ENCODE measurements at regions of chr18 and their contacts with region 1.

Region 1: DNA sequence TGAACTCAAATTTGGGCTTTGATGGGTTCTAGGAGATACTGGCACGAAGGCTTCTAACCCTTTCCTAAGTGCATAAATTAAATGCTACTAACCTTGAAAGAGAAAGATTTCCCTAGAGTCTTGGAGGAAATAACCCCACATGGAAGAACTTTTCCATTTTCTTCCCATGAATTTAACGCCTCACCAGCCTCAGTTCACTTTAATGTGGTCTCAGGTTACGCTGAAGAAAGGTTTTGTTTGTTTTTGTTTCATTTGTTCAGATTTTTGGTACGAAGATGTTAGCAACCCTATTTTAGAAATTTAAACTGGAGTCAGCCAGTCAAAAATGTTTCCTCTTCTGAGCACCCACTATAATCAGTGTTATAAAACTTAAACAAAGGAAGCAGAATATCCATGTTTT is 30.7 kb downstream of the METTL4 start:
- DNase-seq: no peak
- ATAC-seq: no peak
- H3K4me3 ChIP-seq: no peak overlapping the region
- H3K27ac ChIP-seq: no peak overlapping the region
- H3K4me1 ChIP-seq: peaks cover 10% of the 10 kb centered on the region
- H3K27me3 ChIP-seq: no peaks in the 10 kb centered on the region
- CTCF ChIP-seq: no peak

Region 2: GRCh38 chr18:1585879-1586488 is 954.6 kb before region 1 on chr18:
- intact Hi-C with region 1: loop called (anchors 5 to 10 kb)
- DNase-seq: no peak
- ATAC-seq: no peak
- H3K4me3 ChIP-seq: no peak overlapping the region
- H3K27ac ChIP-seq: no peak overlapping the region
- H3K4me1 ChIP-seq: no peaks in the 10 kb centered on the region
- H3K27me3 ChIP-seq: no peaks in the 10 kb centered on the region
- CTCF ChIP-seq: peak; percentile 33

Region 3: DNA sequence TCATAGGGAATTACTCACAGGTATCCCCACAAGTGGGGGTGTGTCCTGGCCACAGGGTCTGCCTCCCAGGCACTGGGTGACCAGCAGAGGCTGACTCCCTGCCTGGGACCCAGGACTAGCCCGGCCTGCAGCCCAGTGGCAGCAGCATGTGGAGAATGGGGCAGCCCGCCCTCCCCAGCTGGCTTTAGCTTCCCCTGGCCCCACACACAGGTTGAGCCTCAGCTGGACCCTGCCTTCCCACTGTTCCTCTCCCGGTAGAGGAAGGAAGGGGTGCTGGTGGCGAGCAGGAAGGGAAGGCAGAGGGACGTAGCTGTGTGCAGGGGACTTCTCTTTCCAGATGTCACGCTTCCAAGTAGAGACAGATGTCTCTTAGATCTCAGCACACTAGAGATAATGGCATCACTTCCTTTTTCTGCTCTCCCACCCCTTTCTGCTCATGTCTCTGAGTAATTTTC is 357.6 kb after region 1 on chr18:
- intact Hi-C with region 1: no loop called
- DNase-seq: peak in 1 of 2 donors; percentile 58
- ATAC-seq: peak in 2 of 4 donors; percentile 12 to 21
- H3K4me3 ChIP-seq: no peak overlapping the region
- H3K27ac ChIP-seq: no peak overlapping the region
- H3K4me1 ChIP-seq: no peaks in the 10 kb centered on the region
- H3K27me3 ChIP-seq: no peaks in the 10 kb centered on the region
- CTCF ChIP-seq: no peak